Activated CD4-positive, alpha-beta T cell treated with anti-CD3 and anti-CD28 coated beads for 36 hours (primary cell): ENCODE measurements at regions of chr1 and their contacts with region 1.

Region 1: DNA sequence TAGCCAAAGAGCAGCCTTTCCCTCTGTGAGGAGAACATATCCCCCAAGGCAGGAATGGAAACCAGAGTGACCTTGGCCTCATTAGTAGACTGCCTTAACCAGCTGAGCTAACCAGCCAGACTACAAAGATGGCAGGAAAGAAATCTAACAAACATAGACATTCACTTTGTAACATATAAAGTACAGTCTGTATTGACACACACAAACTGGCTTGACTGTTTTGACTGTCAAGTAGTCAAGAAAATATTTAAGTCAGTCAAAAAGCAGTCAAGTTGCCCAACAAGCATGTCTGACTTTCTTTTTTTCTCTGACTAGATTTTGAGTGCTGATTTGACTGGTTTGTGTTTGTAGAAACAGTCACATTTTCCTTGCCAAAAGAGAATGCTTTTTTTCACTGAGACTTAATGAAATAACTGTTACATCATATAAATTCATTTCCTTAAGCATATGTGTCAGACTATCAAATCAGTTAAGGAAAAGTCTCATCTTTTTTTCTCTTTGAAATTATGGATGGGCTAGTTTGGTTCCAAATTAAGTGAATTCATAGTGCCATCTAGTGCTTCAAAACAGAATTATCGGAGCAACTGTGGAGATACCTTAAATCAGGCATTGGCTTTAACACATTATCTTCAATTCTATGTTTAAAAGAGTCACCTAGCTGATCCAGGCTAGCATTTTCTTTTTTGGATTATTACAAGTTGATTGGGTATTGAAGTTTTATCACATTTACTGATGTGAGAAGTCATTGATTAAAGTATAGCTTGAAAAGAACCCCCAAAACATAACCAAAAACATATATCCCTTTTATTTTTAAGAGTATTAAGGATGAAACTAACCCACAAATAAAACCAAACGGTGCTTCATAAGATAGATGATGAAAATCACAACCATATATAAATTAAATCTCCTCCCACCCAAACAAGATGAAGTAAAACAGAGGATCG is 75.0 kb downstream of the ATP6V1G3 start:
- DNase-seq: no peak
- ATAC-seq: peak; percentile 74
- H3K4me3 Mint-ChIP-seq: no peak overlapping the region
- H3K27ac Mint-ChIP-seq: peak overlapping the region; percentile 58
- H3K4me1 Mint-ChIP-seq: peaks cover 20% of the 10 kb centered on the region
- H3K27me3 Mint-ChIP-seq: no peaks in the 10 kb centered on the region

Region 2: DNA sequence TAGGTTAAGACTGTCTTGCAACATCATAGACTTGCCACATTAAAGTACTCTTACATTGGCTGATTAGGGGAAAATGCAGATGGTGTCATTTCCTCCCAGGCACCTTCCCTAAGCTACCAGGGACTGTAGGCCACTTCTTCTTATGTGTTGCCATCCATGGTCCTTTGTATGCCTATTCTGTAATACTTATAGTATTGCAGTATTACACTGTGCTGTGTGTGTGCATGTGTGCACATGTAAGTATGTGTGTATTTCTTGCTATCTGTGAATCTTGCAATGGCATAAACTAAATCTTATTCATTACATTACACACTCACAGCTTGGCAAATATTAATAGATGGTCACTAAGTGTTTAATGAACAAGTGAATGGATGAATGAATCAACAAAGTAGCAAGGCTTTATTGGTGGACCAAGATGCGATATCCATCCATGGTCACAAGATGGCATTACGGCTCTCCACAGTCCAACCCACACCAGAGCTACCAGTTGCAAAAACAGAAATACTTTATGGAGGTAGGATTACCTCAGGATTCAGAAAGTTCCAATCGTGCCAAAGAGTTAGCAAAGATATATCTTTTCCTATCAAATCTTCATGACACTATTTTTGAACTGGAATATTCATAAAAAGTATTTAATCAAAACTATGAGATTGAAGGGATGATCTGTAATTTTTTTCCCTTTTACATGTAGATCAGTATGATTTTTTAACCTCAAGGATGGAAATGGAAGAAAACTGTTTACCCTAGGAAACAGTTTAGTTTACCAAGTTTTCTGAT is 850.4 kb before region 1 on chr1:
- CTCF ChIA-PET with region 1: no interaction called
- POLR2A ChIA-PET with region 1: no interaction called
- intact Hi-C with region 1: loop called in 1 of 2 experiments (anchors 5 kb)
- DNase-seq: peak; percentile 54
- ATAC-seq: peak; percentile 70
- H3K4me3 Mint-ChIP-seq: no peak overlapping the region
- H3K27ac Mint-ChIP-seq: no peak overlapping the region
- H3K4me1 Mint-ChIP-seq: no peaks in the 10 kb centered on the region
- H3K27me3 Mint-ChIP-seq: no peaks in the 10 kb centered on the region

Region 3: GRCh38 chr1:198088360-198089071 is 377.0 kb before region 1 on chr1:
- CTCF ChIA-PET with region 1: interaction called, 4 read pairs
- POLR2A ChIA-PET with region 1: no interaction called
- intact Hi-C with region 1: loop called (anchors 1 kb)
- DNase-seq: peak; percentile 16
- ATAC-seq: peak; percentile 65
- H3K4me3 Mint-ChIP-seq: no peak overlapping the region
- H3K27ac Mint-ChIP-seq: no peak overlapping the region
- H3K4me1 Mint-ChIP-seq: peaks cover 8% of the 10 kb centered on the region
- H3K27me3 Mint-ChIP-seq: peaks cover 2% of the 10 kb centered on the region

Region 4: DNA sequence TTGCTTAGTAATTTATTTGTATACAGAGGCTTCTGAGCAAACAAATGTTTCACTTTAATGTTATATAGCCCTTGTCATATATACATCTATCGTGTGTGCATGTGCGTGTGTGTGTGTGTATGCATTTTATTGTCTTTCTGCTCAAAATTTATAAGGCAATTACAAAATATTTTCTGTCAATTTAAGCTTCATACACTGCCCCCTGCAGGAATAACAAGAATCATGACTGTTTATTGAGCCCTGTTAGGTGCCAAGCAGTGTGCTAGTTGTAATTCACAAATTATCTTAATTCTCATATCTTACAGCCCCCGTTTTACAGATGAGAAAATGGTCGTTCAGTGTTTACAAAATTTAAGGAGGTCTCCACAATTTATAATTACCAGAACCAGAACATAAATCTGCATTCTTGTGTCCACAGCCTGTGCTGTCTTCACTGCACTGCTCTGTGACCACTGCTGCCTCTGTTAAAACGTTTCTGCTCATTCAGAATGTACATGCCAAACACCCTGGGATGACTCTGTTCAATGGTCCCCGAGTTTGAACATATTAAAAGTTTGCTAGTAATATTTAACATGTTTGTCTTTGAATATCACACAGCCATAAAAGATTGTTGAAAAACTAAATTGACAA is 106.3 kb before region 1 on chr1:
- CTCF ChIA-PET with region 1: no interaction called
- POLR2A ChIA-PET with region 1: no interaction called
- intact Hi-C with region 1: loop called in 1 of 2 experiments (anchors 2 kb)
- DNase-seq: no peak
- ATAC-seq: no peak
- H3K4me3 Mint-ChIP-seq: no peak overlapping the region
- H3K27ac Mint-ChIP-seq: no peak overlapping the region
- H3K4me1 Mint-ChIP-seq: peaks cover 5% of the 10 kb centered on the region
- H3K27me3 Mint-ChIP-seq: no peaks in the 10 kb centered on the region

Region 5: GRCh38 chr1:198588845-198589244 is 123.4 kb after region 1 on chr1:
- CTCF ChIA-PET with region 1: no interaction called
- POLR2A ChIA-PET with region 1: no interaction called
- intact Hi-C with region 1: no loop called
- DNase-seq: no peak
- ATAC-seq: no peak
- H3K4me3 Mint-ChIP-seq: no peak overlapping the region
- H3K27ac Mint-ChIP-seq: no peak overlapping the region
- H3K4me1 Mint-ChIP-seq: peaks cover 7% of the 10 kb centered on the region
- H3K27me3 Mint-ChIP-seq: no peaks in the 10 kb centered on the region

Region 6: GRCh38 chr1:198734323-198735008 is 269.0 kb after region 1 on chr1:
- CTCF ChIA-PET with region 1: no interaction called
- POLR2A ChIA-PET with region 1: no interaction called
- intact Hi-C with region 1: no loop called
- DNase-seq: no peak
- ATAC-seq: peak; percentile 85
- H3K4me3 Mint-ChIP-seq: peak overlapping the region; percentile 1
- H3K27ac Mint-ChIP-seq: peak overlapping the region; percentile 42
- H3K4me1 Mint-ChIP-seq: peaks cover 73% of the 10 kb centered on the region
- H3K27me3 Mint-ChIP-seq: no peaks in the 10 kb centered on the region

Region 7: GRCh38 chr1:198922638-198923430 is 457.4 kb after region 1 on chr1:
- CTCF ChIA-PET with region 1: no interaction called
- POLR2A ChIA-PET with region 1: no interaction called
- intact Hi-C with region 1: loop called in 1 of 2 experiments (anchors 1 kb)
- DNase-seq: no peak
- ATAC-seq: peak; percentile 56
- H3K4me3 Mint-ChIP-seq: no peak overlapping the region
- H3K27ac Mint-ChIP-seq: peak overlapping the region; percentile 76
- H3K4me1 Mint-ChIP-seq: peaks cover 74% of the 10 kb centered on the region
- H3K27me3 Mint-ChIP-seq: no peaks in the 10 kb centered on the region